Activated CD8-positive, alpha-beta T cell treated with anti-CD3 and anti-CD28 coated beads, Interleukin-2, amount 10 ng/mL, durations not matched to agents 7 days and 5 days (primary cell): ENCODE measurements at regions of chr16 and their contacts with region 1.

Region 1: GRCh38 chr16:68200088-68200783 is 35.7 kb downstream of the ESRP2 start:
- DNase-seq: no peak
- ATAC-seq: no peak
- H3K4me3 Mint-ChIP-seq: no peak overlapping the region
- H3K27ac Mint-ChIP-seq: no peak overlapping the region
- H3K4me1 Mint-ChIP-seq: peaks cover 3% of the 10 kb centered on the region
- H3K27me3 Mint-ChIP-seq: no peaks in the 10 kb centered on the region

Region 2: GRCh38 chr16:68074850-68075555 is 125.2 kb before region 1 on chr16:
- CTCF ChIA-PET with region 1: no interaction called
- POLR2A ChIA-PET with region 1: no interaction called
- DNase-seq: peak; percentile 95
- ATAC-seq: peak; percentile 81
- H3K4me3 Mint-ChIP-seq: peak overlapping the region; percentile 57
- H3K27ac Mint-ChIP-seq: peak overlapping the region; percentile 89
- H3K4me1 Mint-ChIP-seq: peaks cover 89% of the 10 kb centered on the region
- H3K27me3 Mint-ChIP-seq: no peaks in the 10 kb centered on the region

Region 3: GRCh38 chr16:68229431-68230198 is 29.4 kb after region 1 on chr16:
- CTCF ChIA-PET with region 1: interaction called, 13 read pairs
- POLR2A ChIA-PET with region 1: no interaction called
- DNase-seq: peak; percentile 55
- ATAC-seq: no peak
- H3K4me3 Mint-ChIP-seq: no peak overlapping the region
- H3K27ac Mint-ChIP-seq: no peak overlapping the region
- H3K4me1 Mint-ChIP-seq: peaks cover 53% of the 10 kb centered on the region
- H3K27me3 Mint-ChIP-seq: no peaks in the 10 kb centered on the region